ENCODE measurements at regions of chr1 and their contacts with region 1.

Region 1: GRCh38 chr1:151832318-151832975 is 845 bp upstream of the RORC start:
- DNase-seq: no peak
- H3K4me3 ChIP-seq: no peak overlapping the region
- H3K27ac ChIP-seq: no peak overlapping the region
- H3K4me1 ChIP-seq: peaks cover 7 to 61% (median 47%) of the 10 kb centered on the region in 4 experiments
- H3K27me3 ChIP-seq: peaks cover 0 to 8% (median 5%) of the 10 kb centered on the region in 5 experiments

Region 2: DNA sequence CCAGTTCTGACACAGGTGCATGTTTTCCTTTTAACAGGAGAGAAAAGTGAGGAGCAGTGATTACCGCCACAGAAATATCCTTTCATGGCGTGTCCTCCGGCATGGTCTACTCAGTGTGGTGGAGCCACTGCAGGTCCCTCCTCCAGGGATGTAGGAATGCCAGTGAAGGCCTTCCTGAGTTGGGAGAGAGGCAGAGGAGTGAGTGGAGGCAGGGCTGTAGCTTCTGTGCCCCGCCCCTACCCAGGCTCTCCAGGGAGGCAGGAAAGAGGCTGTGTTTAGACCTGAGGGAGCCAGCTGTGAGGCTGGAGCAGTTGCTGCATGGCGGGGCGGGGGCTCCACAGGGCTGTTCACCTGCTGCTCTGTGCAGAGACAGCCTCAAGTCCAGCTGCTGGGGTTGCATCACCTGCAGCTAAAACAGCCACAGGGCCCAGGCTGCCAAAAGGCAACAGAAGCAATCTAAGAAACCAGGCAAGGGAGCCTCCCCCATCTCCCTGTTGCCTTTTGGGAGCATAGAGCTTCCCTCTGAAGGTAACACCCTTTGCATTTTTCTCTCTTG is 851.2 kb before region 1 on chr1:
- CTCF ChIA-PET with region 1: no interaction called
- POLR2A ChIA-PET with region 1: no interaction called
- DNase-seq: no peak
- H3K4me3 ChIP-seq: no peak overlapping the region
- H3K27ac ChIP-seq: no peak overlapping the region
- H3K4me1 ChIP-seq: peaks cover 18 to 52% (median 44%) of the 10 kb centered on the region in 4 experiments
- H3K27me3 ChIP-seq: no peaks in the 10 kb centered on the region

Region 3: GRCh38 chr1:151574545-151575529 is 257.6 kb before region 1 on chr1:
- CTCF ChIA-PET with region 1: no interaction called
- POLR2A ChIA-PET with region 1: no interaction called
- DNase-seq: peak in 1 of 3 donors; percentile 8
- H3K4me3 ChIP-seq: no peak overlapping the region
- H3K27ac ChIP-seq: no peak overlapping the region
- H3K4me1 ChIP-seq: no peaks in the 10 kb centered on the region
- H3K27me3 ChIP-seq: no peaks in the 10 kb centered on the region

Region 4: DNA sequence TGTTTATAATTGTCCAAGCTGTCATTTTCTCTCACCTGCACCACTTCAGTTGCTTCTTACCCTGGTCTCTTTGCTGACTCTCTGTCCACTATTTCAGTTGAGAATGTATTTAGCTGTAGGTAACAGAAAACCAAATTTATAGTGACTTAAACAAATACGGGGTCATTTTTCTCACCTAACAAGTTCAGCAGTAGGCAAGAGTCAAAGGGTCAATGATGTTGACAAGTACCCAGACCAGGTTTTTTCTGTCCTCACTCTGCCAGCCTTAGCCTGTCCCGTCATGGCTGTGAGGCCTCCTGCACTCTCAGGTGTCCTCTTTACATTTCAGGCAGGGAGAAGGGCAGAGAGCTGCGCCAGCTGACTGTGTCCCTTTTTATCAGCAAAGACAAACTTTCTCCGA is 99.3 kb before region 1 on chr1:
- CTCF ChIA-PET with region 1: interaction called, 11 read pairs
- POLR2A ChIA-PET with region 1: no interaction called
- DNase-seq: no peak
- H3K4me3 ChIP-seq: no peak overlapping the region
- H3K27ac ChIP-seq: no peak overlapping the region
- H3K4me1 ChIP-seq: no peaks in the 10 kb centered on the region
- H3K27me3 ChIP-seq: peaks cover 0 to 14% (median 0%) of the 10 kb centered on the region in 5 experiments

Region 5: DNA sequence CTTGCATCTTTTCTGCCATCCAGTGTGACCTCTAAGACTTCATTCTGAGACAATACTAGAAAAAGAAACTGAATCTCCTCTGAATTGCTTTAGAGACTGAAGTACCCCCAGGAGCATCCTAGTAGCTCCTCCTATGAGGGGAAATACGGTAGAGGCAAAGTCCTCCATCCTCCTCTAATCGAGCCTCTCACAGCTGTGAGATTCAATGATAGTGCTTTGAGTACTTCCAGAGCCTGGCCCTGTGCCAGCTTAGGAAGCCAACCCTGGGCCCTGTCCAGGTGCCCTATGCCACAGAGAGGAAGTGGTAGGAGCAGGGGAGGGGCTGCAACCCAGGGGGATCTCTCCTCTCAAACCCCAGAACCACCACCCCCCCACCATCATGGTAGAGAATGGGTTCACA is 11.5 kb before region 1 on chr1:
- CTCF ChIA-PET with region 1: interaction called, 18 read pairs
- POLR2A ChIA-PET with region 1: no interaction called
- DNase-seq: peak; percentile 46 to 80 (median 78)
- H3K4me3 ChIP-seq: peak overlapping the region in 1 of 7 experiments; percentile 12
- H3K27ac ChIP-seq: no peak overlapping the region
- H3K4me1 ChIP-seq: peaks cover 6 to 58% (median 46%) of the 10 kb centered on the region in 4 experiments
- H3K27me3 ChIP-seq: no peaks in the 10 kb centered on the region

Region 6: GRCh38 chr1:151846062-151846568 is 13.7 kb after region 1 on chr1:
- CTCF ChIA-PET with region 1: interaction called, 17 read pairs
- POLR2A ChIA-PET with region 1: interaction called, 5 read pairs
- DNase-seq: peak in 2 of 3 donors; percentile 48 to 62
- H3K4me3 ChIP-seq: no peak overlapping the region
- H3K27ac ChIP-seq: no peak overlapping the region
- H3K4me1 ChIP-seq: peaks cover 0 to 47% (median 22%) of the 10 kb centered on the region in 4 experiments
- H3K27me3 ChIP-seq: no peaks in the 10 kb centered on the region